Aorta (tissue), 5 donors: ENCODE measurements at regions of chr2 and their contacts with region 1.

Region 1: DNA sequence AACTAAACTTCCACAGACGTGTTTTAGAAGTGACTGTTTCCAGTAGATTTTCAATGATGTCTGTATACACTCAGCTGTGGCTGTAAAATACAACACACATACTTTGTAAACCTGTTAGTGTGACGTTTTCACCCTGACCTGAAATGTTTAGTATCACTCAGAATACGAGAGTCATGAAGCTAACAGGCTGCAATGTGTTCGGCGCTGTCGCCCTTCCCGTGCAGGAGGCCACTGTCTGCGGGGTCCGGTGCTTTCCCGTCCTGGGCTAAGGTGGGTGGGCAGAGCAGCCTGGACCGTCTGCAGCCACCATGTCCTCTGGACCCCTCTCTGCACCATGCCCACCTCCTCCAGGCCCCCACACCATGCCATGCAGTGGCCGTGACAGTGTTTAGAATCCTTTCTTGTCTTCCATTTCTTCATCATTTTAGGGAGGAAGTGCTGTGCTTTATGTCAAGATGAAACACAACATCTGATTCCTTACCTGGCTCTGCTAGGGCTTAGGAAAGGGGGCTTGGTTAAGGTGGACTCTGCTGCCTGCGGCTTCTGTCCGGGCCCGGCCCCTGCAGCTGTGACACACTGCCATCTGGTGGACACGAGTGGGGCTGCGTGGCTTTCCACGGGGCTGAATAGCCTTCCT is 53.8 kb upstream of the RBM44 start:
- DNase-seq: peak; percentile 81 to 94
- ATAC-seq: peak; percentile 91
- H3K4me3 ChIP-seq: no peak overlapping the region
- H3K27ac ChIP-seq: peak overlapping the region in 1 of 2 donors; percentile 72
- H3K4me1 ChIP-seq: peaks cover 0 to 2% of the 10 kb centered on the region in 2 donors
- H3K27me3 ChIP-seq: no peaks in the 10 kb centered on the region

Region 2: GRCh38 chr2:237512774-237513466 is 231.8 kb before region 1 on chr2:
- intact Hi-C with region 1: loop called (anchors 5 kb)
- DNase-seq: peak; percentile 87 to 95
- ATAC-seq: peak; percentile 75
- H3K4me3 ChIP-seq: no peak overlapping the region
- H3K27ac ChIP-seq: no peak overlapping the region
- H3K4me1 ChIP-seq: no peaks in the 10 kb centered on the region
- H3K27me3 ChIP-seq: no peaks in the 10 kb centered on the region

Region 3: GRCh38 chr2:237581751-237582746 is 162.7 kb before region 1 on chr2:
- intact Hi-C with region 1: loop called (anchors 2 to 5 kb)
- DNase-seq: peak; percentile 72 to 86
- ATAC-seq: peak; percentile 84
- H3K4me3 ChIP-seq: no peak overlapping the region
- H3K27ac ChIP-seq: peak overlapping the region; percentile 34 to 82
- H3K4me1 ChIP-seq: no peaks in the 10 kb centered on the region
- H3K27me3 ChIP-seq: no peaks in the 10 kb centered on the region

Region 4: GRCh38 chr2:237590272-237591140 is 154.2 kb before region 1 on chr2 and contains the start of gene RAB17:
- intact Hi-C with region 1: loop called (anchors 5 kb)
- DNase-seq: peak; percentile 48 to 72
- ATAC-seq: no peak
- H3K4me3 ChIP-seq: no peak within 1 kb of the TSS
- H3K27ac ChIP-seq: peak within 1 kb of the TSS in 1 of 2 donors; percentile 39
- H3K4me1 ChIP-seq: peaks cover 0 to 4% of the 10 kb centered on the region in 2 donors
- H3K27me3 ChIP-seq: no peaks in the 10 kb centered on the region
- total RNA-seq, gene RAB17: 3.7 to 4.5 TPM

Region 5: GRCh38 chr2:237604960-237605359 is 139.8 kb before region 1 on chr2:
- intact Hi-C with region 1: no loop called
- DNase-seq: no peak
- ATAC-seq: no peak
- H3K4me3 ChIP-seq: no peak overlapping the region
- H3K27ac ChIP-seq: no peak overlapping the region
- H3K4me1 ChIP-seq: no peaks in the 10 kb centered on the region
- H3K27me3 ChIP-seq: no peaks in the 10 kb centered on the region

Region 6: GRCh38 chr2:237674731-237675276 is 69.9 kb before region 1 on chr2:
- intact Hi-C with region 1: loop called (anchors 2 to 5 kb)
- DNase-seq: peak; percentile 93 to 95
- ATAC-seq: peak; percentile 89
- H3K4me3 ChIP-seq: peak overlapping the region in 1 of 2 donors; percentile 23
- H3K27ac ChIP-seq: peak overlapping the region; percentile 92 to 99
- H3K4me1 ChIP-seq: peaks cover 2 to 4% of the 10 kb centered on the region in 2 donors
- H3K27me3 ChIP-seq: no peaks in the 10 kb centered on the region